Lower leg skin (tissue), 4 donors: ENCODE measurements at regions of chr1 and their contacts with region 1.

Region 1: DNA sequence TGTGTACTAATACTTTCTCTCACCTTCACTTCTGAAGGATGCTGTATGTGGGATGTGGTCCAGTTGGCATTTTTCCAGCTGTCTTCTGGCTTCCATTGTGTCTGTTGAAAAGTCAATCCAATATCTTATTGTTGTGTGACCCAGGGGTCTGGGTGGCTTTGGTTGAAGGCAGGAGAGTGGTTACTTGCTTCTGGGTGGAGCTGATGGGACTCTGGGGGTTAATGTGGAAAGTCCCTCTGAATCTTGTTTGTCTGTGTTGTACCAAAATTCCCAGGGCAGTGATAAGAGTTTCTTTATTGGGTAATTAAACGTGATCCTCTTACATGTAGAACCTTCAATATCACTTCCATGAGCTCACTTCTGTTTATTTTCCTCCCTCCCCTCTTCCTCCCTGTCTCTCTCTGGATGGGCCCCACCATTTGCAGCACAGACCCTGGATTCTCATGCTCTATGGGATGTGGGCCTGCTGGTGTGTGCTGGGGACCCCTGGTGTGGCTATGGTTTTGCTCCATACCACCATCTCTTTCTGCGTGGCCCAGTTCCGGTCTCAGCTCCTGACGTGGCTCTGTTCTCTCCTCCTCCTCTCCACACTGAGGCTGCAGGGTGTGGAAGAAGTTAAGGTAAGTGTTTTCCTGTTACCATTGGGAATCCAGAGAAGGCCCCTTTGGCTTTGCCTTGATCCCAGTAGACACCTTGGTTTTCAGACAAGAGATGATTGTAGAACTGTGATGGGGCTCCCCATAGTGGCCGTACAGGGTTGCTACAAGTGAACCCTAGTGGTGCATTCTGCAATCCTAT is 71.5 kb downstream of the HHAT start:
- DNase-seq: peak in 1 of 2 donors; percentile 26
- H3K4me3 ChIP-seq: no peak overlapping the region
- CTCF ChIP-seq: no peak
- POLR2A ChIP-seq: no peak

Region 2: DNA sequence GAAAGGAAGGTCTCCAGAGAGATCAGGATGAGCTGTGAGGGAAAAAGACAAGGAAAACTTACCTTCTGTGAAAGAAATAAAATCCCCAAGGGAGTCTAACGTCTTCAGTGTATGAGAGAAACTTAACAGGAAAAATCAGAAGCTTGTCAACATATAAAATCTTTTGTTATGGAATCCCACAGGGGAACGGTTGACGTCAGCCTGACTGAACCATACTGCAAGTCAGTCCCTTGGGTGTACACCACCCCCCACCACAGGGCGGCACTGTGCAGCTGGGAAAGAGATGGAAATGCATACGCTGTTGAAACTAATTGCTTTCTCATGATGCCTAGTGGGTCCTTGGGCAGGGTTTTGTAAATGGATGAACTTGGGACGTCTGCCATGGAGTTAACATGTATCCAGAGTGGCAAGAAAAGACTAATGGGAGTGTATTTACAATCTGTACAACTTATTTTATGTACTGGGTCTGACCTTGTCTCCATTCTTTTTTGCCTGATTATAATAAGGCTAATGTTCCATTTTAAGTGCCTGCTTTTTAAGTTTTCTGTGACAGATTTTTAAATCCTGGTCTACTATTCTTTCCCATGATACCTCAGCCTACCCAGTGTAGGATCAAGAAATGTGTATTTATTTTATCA is 549.8 kb before region 1 on chr1:
- intact Hi-C with region 1: loop called (anchors 10 kb)
- DNase-seq: peak in 1 of 2 donors; percentile 22
- H3K4me3 ChIP-seq: no peak overlapping the region
- CTCF ChIP-seq: no peak
- POLR2A ChIP-seq: no peak

Region 3: GRCh38 chr1:211133836-211134669 is 733.8 kb after region 1 on chr1 and contains the start of gene KCNH1:
- intact Hi-C with region 1: loop called (anchors 10 kb)
- DNase-seq: peak; percentile 19 to 89
- H3K4me3 ChIP-seq: peak within 1 kb of the TSS; percentile 10
- CTCF ChIP-seq: no peak
- POLR2A ChIP-seq: no peak
- total RNA-seq, gene KCNH1: not detected